Motor neuron (in vitro differentiated cells): ENCODE measurements at regions of chr1 and their contacts with region 1.

Region 1: GRCh38 chr1:107389410-107390396 is 248.9 kb downstream of the NTNG1 start:
- ATAC-seq: peak in 7 of 8 experiments; percentile 23 to 96 (median 62)
- H3K4me3 ChIP-seq: no peak overlapping the region
- H3K27ac ChIP-seq: peak overlapping the region in 1 of 2 donors; percentile 26
- H3K4me1 ChIP-seq: peaks cover 17 to 18% of the 10 kb centered on the region in 2 donors

Region 2: DNA sequence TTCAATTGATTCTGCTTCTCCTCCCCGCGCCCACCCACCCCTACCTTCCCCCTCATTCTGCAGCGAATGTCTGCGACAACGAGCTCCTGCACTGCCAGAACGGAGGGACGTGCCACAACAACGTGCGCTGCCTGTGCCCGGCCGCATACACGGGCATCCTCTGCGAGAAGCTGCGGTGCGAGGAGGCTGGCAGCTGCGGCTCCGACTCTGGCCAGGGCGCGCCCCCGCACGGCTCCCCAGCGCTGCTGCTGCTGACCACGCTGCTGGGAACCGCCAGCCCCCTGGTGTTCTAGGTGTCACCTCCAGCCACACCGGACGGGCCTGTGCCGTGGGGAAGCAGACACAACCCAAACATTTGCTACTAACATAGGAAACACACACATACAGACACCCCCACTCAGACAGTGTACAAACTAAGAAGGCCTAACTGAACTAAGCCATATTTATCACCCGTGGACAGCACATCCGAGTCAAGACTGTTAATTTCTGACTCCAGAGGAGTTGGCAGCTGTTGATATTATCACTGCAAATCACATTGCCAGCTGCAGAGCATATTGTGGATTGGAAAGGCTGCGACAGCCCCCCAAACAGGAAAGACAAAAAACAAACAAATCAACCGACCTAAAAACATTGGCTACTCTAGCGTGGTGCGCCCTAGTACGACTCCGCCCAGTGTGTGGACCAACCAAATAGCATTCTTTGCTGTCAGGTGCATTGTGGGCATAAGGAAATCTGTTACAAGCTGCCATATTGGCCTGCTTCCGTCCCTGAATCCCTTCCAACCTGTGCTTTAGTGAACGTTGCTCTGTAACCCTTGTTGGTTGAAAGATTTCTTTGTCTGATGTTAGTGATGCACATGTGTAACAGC is 91.1 kb after region 1 on chr1:
- in situ Hi-C with region 1: loop called in 1 of 9 experiments (anchors 25 kb)
- ATAC-seq: peak in 5 of 8 experiments; percentile 38 to 74 (median 56)
- H3K4me3 ChIP-seq: no peak overlapping the region
- H3K27ac ChIP-seq: no peak overlapping the region
- H3K4me1 ChIP-seq: peaks cover 13 to 28% of the 10 kb centered on the region in 2 donors